ENCODE measurements at regions of chr2 and their contacts with region 1.

Region 1: DNA sequence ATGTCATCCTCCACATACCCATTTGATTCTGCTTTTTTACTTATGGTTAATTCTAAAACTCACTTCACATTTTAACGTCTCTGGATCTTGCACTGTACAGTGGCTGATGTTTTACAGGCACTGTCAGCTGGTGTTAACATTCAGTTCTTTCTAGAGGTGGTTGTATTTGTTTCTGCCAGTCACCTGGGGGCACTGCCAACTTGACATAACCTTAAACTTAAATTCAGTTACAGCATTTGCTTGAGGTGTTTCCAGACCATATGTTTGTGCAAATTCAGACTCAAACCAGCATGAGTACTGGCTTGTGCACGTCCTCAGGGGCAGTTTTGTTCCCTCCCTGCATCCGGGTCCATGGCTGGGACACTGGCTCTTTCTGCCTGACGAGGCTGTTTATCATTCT is 5.3 kb upstream of the TMEM185B start:
- DNase-seq: no peak
- H3K4me3 ChIP-seq: no peak overlapping the region
- H3K27ac ChIP-seq: no peak overlapping the region
- H3K4me1 ChIP-seq: peaks cover 9% of the 10 kb centered on the region
- H3K27me3 ChIP-seq: no peaks in the 10 kb centered on the region
- CTCF ChIP-seq: no peak
- EP300 ChIP-seq: no peak
- POLR2A ChIP-seq: no peak

Region 2: GRCh38 chr2:120246546-120247300 is 18.2 kb after region 1 on chr2:
- intact Hi-C with region 1: loop called in 1 of 4 experiments (anchors 2 kb)
- DNase-seq: no peak
- H3K4me3 ChIP-seq: no peak overlapping the region
- H3K27ac ChIP-seq: no peak overlapping the region
- H3K4me1 ChIP-seq: no peaks in the 10 kb centered on the region
- H3K27me3 ChIP-seq: no peaks in the 10 kb centered on the region
- CTCF ChIP-seq: no peak
- EP300 ChIP-seq: no peak
- POLR2A ChIP-seq: no peak

Region 3: DNA sequence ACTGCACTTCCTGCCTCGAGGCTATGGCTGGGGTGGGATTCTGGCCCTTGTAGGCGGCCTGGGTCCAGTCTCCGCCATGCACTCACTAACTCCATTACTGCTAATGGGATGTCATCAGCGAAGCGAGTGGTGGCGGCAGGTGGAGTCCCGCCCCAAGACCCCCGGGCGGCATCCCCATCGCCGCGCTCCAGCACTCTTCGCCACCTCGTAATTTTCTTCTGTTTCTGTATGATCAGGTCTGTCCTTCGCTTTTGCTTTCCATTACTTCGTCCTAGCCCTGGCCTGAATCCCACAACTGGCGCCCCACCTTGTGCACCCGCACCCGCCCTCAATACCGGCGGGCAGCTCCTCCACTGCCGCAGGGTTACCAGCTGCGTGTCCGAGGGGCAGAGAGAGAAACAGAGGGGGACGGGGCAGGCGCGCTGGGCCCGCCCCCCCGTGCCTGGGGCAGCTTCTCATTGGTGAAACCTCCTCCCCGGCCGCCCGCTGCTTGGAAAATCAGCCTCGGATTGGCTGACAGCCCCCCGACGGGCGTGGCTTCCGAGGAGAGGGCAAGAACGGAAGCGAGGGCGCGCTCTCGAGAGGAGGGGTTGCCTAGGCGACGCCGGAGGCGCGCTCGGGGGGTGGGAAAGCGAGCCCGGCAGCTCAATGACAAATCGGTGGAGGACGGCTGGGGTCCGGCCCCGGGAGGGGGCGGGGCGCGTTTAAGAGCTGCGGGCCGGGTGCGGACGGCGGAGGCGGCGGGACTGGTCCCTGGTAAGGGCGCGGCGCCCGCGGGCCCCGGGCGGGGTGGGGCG is 23.9 kb after region 1 on chr2 and contains the start of gene RALB:
- intact Hi-C with region 1: loop called in 2 of 4 experiments (anchors 1 to 2 kb)
- DNase-seq: peak; percentile 99 to 100 (median 99)
- H3K4me3 ChIP-seq: peak within 1 kb of the TSS; percentile 76
- H3K27ac ChIP-seq: peak within 1 kb of the TSS; percentile 82 to 97
- H3K4me1 ChIP-seq: peaks cover 2% of the 10 kb centered on the region
- H3K27me3 ChIP-seq: no peaks in the 10 kb centered on the region
- CTCF ChIP-seq: no peak
- EP300 ChIP-seq: no peak
- POLR2A ChIP-seq: peak; percentile 21
- total RNA-seq, gene RALB: 18.2 to 41.2 (median 32.5) TPM

Measured in ovary (tissue), 10 donors.